Colonic mucosa (tissue), 4 donors: ENCODE measurements at regions of chr11 and their contacts with region 1.

Region 1: DNA sequence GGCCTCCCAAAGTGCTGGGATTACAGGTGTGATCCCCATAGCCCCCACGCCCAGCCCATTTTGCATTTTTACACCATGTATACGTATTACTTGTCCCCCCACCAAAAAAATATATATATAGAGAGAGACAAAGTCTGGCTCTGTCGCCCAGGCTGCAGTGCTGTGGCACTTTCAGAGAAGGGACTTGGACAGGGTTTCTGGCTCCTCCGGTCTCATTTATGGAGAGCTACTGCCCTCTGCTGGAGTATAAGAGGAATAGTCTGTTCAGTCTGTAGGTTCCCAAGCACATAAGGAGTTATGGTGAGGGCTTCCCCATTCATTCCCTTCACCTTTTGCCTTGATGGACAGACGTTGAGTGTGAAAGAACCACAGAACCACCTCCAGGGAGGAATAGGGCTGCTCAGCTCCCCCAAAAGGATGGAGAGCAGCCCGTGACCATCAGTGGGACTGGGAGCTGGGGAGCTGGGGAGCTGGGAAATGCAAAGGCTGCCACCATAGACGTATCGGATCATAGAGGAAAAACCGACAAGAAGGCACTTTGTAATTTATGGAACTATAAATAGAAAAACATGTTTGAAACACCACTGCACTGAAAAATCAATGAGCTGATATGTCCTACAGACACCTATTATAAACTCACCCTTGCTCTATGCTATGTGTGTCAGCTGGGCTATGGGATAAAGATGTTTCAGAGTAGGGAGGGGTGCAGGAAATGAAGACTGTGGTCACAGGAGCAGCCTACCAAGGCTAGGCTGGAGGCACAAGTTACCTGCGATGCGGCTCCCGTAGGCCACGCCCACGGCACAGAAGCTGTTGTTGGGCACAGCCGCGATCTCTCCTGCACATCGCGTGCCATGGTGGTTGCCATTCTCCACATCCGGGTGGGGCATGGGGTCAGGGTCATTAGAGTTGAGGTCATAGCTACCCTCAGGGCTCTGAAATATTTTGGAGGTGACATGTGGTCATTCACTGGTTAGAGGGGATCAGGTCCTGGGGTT is 5.2 kb downstream of the PCSK7 start:
- DNase-seq: no peak
- H3K4me3 ChIP-seq: no peak overlapping the region
- H3K27ac ChIP-seq: no peak overlapping the region
- H3K4me1 ChIP-seq: peaks cover 19% of the 10 kb centered on the region
- H3K27me3 ChIP-seq: no peaks in the 10 kb centered on the region
- CTCF ChIP-seq: peak; percentile 62

Region 2: DNA sequence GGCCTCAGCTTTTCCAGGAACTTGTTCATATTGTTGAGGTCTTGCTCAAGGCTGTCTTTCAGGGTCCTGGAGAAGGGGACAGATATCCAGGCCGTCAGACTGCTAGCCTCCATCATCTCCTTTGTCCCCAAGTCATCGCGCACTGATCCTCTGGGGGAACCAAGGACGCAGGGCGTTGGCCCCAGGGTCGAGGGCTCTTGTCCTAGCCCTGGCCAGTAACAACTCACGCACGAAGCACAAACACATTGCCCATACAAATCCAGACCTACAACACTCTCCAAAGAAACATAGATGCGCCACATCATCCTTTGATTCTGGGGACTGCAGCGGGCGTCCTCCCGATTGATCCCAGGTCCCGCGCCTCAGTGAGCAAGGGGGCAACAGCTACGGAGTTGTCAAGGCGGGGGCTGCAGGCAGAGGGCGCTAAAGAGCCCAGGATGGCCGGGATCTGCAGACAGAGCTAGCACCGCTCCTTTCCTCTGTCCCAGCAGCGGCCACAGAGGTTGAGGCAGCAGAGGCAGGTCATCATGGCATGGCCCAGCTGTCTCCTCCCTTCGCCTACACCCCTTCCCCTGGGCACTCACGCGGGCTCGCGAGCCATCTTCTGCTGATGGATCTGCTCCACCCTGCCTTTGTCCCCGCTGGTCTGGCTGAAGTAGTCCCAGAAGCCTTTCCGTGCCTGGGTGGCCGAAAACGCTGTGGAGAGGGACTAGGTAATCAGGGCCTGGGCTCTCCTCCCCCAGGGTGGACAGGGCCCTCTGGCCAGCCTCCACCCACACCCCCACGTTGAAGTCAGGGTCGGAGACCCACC is 435.5 kb before region 1 on chr11:
- intact Hi-C with region 1: loop called (anchors 5 kb)
- DNase-seq: peak; percentile 77
- H3K4me3 ChIP-seq: no peak overlapping the region
- H3K27ac ChIP-seq: no peak overlapping the region
- H3K4me1 ChIP-seq: peaks cover 6% of the 10 kb centered on the region
- H3K27me3 ChIP-seq: no peaks in the 10 kb centered on the region
- CTCF ChIP-seq: peak; percentile 89

Region 3: GRCh38 chr11:116879800-116880625 is 346.7 kb before region 1 on chr11:
- intact Hi-C with region 1: loop called (anchors 10 kb)
- DNase-seq: no peak
- H3K4me3 ChIP-seq: no peak overlapping the region
- H3K27ac ChIP-seq: no peak overlapping the region
- H3K4me1 ChIP-seq: no peaks in the 10 kb centered on the region
- H3K27me3 ChIP-seq: no peaks in the 10 kb centered on the region
- CTCF ChIP-seq: peak; percentile 52

Region 4: DNA sequence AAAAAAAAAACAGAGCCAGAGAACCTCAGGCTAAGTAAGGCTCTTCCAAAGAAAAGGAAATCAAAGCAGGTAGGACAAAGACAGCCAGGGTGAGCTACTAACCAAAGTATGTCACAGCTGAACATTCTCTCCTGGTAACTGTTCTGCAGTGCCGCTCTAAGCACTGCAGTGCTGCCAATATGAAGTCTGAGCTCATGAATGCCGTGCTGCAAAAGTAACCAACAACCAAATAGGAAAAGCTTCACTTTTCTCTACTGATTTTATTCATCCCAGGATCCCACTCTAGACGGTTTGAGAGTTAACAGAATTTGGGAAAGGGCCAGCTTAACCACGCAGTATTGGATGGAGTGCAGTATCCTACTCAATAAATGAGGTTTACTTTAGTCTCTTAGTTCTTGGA is 131.9 kb before region 1 on chr11:
- intact Hi-C with region 1: no loop called
- DNase-seq: no peak
- H3K4me3 ChIP-seq: no peak overlapping the region
- H3K27ac ChIP-seq: no peak overlapping the region
- H3K4me1 ChIP-seq: peaks cover 17% of the 10 kb centered on the region
- H3K27me3 ChIP-seq: no peaks in the 10 kb centered on the region
- CTCF ChIP-seq: no peak